Activated B cell treated with CpG ODN at 0.5 μM for 24 hours (primary cell): ENCODE measurements at regions of chr7 and their contacts with region 1.

Region 1: DNA sequence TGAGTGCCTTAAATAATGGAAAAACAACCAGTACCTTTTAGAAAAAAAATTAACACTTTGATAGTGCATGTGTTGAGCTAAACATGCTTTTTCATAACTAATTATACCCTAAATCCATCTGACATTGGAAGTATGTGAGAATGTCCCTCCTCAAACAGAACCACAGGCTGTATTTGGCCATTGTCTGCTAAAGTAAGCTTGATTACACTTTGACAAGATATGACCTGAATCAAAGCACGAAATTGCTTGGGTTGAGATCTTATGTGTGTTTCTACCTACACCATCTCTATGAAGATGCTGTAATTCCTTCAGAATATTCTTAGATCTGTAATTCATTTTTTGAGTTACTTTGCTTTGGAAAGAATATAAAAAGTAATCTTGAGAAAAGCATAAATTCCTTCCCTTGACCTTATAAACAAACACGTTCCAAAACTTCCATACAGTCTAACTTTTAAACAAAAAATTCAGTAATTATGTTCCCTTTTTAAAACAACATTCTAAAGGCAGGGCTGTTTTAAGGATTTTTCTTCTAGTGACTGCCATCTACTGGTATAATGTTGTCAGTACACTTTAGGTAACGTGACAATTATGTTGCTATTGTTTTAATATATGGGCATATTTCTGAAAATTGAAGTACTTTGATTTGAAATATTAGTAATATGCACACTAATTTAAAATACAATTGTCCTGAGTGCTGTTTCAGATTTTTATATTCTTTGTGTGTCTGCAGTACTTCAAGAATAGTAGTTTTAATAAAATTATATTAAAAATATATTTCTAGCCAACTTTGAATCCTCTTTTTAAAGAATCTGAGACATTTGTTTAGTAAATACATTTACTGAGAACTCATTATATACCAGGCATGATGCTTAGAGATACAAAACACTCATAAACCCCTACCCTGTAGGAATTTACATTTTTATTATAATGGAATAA is 20.9 kb downstream of the CD36 start:
- DNase-seq: no peak
- ATAC-seq: no peak
- H3K4me3 Mint-ChIP-seq: no peak overlapping the region
- H3K27ac Mint-ChIP-seq: no peak overlapping the region
- H3K4me1 Mint-ChIP-seq: no peaks in the 10 kb centered on the region
- H3K27me3 Mint-ChIP-seq: no peaks in the 10 kb centered on the region
- CTCF ChIP-seq: no peak

Region 2: GRCh38 chr7:80060218-80060806 is 599.1 kb before region 1 on chr7:
- CTCF ChIA-PET with region 1: no interaction called
- POLR2A ChIA-PET with region 1: no interaction called
- intact Hi-C with region 1: loop called (anchors 1 kb)
- DNase-seq: no peak
- ATAC-seq: no peak
- H3K4me3 Mint-ChIP-seq: no peak overlapping the region
- H3K27ac Mint-ChIP-seq: no peak overlapping the region
- H3K4me1 Mint-ChIP-seq: no peaks in the 10 kb centered on the region
- H3K27me3 Mint-ChIP-seq: no peaks in the 10 kb centered on the region
- CTCF ChIP-seq: no peak

Region 3: GRCh38 chr7:80095545-80095944 is 563.8 kb before region 1 on chr7:
- CTCF ChIA-PET with region 1: no interaction called
- POLR2A ChIA-PET with region 1: no interaction called
- intact Hi-C with region 1: loop called (anchors 10 kb)
- DNase-seq: no peak
- ATAC-seq: no peak
- H3K4me3 Mint-ChIP-seq: no peak overlapping the region
- H3K27ac Mint-ChIP-seq: no peak overlapping the region
- H3K4me1 Mint-ChIP-seq: no peaks in the 10 kb centered on the region
- H3K27me3 Mint-ChIP-seq: no peaks in the 10 kb centered on the region
- CTCF ChIP-seq: no peak

Region 4: GRCh38 chr7:80428161-80429054 is 231.0 kb before region 1 on chr7:
- CTCF ChIA-PET with region 1: interaction called, 3 read pairs
- POLR2A ChIA-PET with region 1: no interaction called
- intact Hi-C with region 1: loop called (anchors 1 kb)
- DNase-seq: no peak
- ATAC-seq: no peak
- H3K4me3 Mint-ChIP-seq: no peak overlapping the region
- H3K27ac Mint-ChIP-seq: no peak overlapping the region
- H3K4me1 Mint-ChIP-seq: no peaks in the 10 kb centered on the region
- H3K27me3 Mint-ChIP-seq: no peaks in the 10 kb centered on the region
- CTCF ChIP-seq: no peak

Region 5: DNA sequence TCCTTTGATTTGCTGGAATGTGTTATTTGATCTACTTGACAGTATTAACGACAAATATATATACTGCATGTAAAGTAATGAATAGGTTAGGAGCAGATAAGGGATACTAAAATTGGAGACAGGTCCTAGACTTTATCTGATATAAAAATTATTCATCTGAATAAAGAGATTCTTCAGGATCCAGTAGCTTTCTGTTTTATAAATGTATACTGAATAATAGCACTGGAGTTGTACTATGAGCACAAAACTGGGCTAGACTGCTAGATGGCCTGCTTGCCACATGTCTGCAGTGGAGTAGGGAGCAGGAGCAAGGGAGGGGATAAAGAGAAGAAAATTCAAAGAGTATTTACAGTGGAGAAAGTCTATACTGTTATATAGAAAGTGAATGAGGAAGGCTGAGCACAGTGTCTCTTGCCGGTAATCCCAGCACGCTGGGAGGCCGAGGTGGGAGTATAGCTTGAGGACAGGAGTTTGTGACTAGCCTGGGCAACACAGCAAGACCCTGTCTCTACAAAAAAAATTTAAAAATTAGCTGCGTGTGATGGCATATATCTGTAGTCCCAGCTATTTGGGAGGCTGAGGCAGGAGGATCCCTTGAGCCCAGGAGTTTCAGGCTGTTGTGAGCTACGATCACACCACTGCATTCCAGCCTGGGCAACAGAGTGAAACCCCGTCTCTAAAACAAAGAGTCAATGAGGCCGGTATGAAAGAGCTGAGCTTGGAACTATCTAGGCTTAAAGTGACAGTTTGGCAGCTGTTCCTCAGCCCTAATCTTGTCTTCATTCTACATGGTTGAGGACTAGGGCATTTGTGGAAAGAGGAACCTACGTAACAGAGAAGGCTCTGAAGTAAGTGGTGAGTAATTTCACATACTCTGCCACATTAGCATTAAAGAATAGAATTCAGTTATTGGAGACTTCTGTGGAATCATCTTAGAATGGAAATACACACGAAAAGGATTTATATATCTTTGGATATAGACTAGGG is 20.8 kb after region 1 on chr7:
- CTCF ChIA-PET with region 1: no interaction called
- POLR2A ChIA-PET with region 1: no interaction called
- intact Hi-C with region 1: loop called (anchors 2 kb)
- DNase-seq: no peak
- ATAC-seq: no peak
- H3K4me3 Mint-ChIP-seq: no peak overlapping the region
- H3K27ac Mint-ChIP-seq: no peak overlapping the region
- H3K4me1 Mint-ChIP-seq: peaks cover 5% of the 10 kb centered on the region
- H3K27me3 Mint-ChIP-seq: no peaks in the 10 kb centered on the region
- CTCF ChIP-seq: no peak